PC-3 (cell line): ENCODE measurements at regions of chr14 and their contacts with region 1.

Region 1: DNA sequence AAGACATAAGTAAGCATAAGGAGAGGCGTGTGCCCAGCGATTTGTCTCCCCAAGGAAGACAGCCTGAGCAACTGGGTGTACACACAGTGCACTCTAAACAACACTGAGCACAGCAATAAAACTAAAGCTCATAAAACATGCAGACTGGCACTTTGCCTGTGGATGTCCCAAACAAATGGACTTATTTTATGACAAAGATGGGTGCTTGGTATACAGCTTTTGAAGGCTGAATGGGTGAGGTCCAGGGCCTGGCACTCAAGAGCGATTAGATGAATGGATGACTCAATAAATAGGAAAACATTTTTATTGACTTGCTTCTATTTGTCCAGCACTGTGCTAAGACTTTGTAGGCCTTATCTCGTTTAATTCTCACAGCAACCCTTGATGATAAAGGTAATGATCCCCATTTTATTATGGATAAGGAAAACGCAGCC is 28.5 kb downstream of the LGMN start:
- DNase-seq: peak; percentile 93
- ATAC-seq: peak; percentile 95
- H3K4me3 ChIP-seq: no peak overlapping the region
- H3K27ac ChIP-seq: peak overlapping the region; percentile 91
- H3K4me1 ChIP-seq: peaks cover 13% of the 10 kb centered on the region
- H3K27me3 ChIP-seq: no peaks in the 10 kb centered on the region
- CTCF ChIP-seq: no peak

Region 2: GRCh38 chr14:92783816-92784431 is 64.0 kb after region 1 on chr14:
- CTCF ChIA-PET with region 1: interaction called, 11 read pairs
- POLR2A ChIA-PET with region 1: no interaction called
- intact Hi-C with region 1: loop called (anchors 1 kb)
- DNase-seq: peak; percentile 85
- ATAC-seq: peak; percentile 93
- H3K4me3 ChIP-seq: no peak overlapping the region
- H3K27ac ChIP-seq: peak overlapping the region; percentile 53; the same call in 1 of the 2 replicates
- H3K4me1 ChIP-seq: peaks cover 26% of the 10 kb centered on the region
- H3K27me3 ChIP-seq: no peaks in the 10 kb centered on the region
- CTCF ChIP-seq: peak; percentile 83